ENCODE measurements at regions of chr20 and their contacts with region 1.

Region 1: DNA sequence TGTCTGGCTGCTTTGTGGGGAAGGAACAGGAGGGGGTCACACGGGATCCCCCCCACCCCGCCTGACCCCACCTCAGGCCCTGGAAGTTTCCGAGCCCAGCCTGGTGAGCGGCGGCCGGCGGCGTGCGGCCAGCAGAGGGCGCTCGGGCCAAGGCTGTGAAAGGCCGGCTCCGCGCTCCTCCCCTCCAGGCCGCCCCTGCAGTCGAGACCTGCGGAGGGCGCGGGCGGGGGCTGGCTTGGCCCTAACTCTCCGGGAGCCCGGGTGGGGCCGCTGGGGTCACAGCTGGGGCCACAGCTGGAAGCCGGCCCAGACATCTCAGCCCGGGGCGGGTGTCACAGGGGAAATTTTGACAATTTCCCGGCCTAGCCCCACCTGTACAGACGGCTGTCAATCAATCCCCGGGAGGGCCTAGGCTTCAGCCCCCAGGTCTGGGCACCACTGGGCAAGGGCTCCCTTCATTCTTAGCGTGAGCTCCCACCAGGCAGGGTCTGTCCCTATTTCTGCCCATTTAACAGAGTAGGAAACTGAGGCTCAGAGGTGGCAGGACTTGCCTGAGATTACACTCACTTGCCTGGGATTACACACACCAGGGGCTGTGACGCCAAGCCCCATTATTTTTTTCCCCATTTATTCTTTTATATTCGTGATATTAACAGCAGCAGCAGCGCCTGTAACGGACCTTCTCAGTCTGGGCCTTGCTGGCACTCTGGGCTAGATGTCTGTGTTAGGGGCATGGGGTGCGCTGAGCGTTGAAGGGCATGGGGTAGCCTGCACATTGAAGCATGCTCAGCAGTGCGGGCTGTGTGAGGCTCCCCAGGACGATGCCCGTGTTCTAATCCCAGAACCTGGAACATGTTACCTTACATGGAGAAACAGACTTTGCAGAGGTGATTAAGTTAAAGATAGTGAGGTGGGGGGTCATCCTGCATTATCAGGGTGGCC is 23.0 kb downstream of the ZBP1 start:
- DNase-seq: peak in 1 of 2 experiments; percentile 92
- H3K4me3 ChIP-seq: peak overlapping the region in 1 of 4 experiments; percentile 49; a peak in 2 of 8 replicates
- H3K27ac ChIP-seq: no peak overlapping the region
- H3K4me1 ChIP-seq: no peaks in the 10 kb centered on the region; a peak in 3 of 7 replicates
- H3K27me3 ChIP-seq: no peaks in the 10 kb centered on the region
- CTCF ChIP-seq: peak; percentile 76 to 90 (median 89)
- EP300 ChIP-seq: no peak
- POLR2A ChIP-seq: no peak
- RAD21 ChIP-seq: peak; percentile 89 to 91

Region 2: GRCh38 chr20:57498425-57499400 is 98.6 kb before region 1 on chr20:
- CTCF ChIA-PET with region 1: interaction called, 15 read pairs
- POLR2A ChIA-PET with region 1: interaction called, 3 read pairs
- DNase-seq: no peak
- H3K4me3 ChIP-seq: no peak overlapping the region
- H3K27ac ChIP-seq: no peak overlapping the region
- H3K4me1 ChIP-seq: peaks cover 0 to 4% (median 2%) of the 10 kb centered on the region in 4 experiments; a peak in 5 of 7 replicates
- H3K27me3 ChIP-seq: no peaks in the 10 kb centered on the region
- CTCF ChIP-seq: peak; percentile 62 to 68 (median 68)
- EP300 ChIP-seq: no peak
- POLR2A ChIP-seq: no peak
- RAD21 ChIP-seq: peak; percentile 52 to 69

Region 3: GRCh38 chr20:57514273-57514751 is 83.0 kb before region 1 on chr20:
- CTCF ChIA-PET with region 1: interaction called, 194 read pairs
- POLR2A ChIA-PET with region 1: interaction called, 3 read pairs
- DNase-seq: peak in 1 of 2 experiments; percentile 71
- H3K4me3 ChIP-seq: no peak overlapping the region
- H3K27ac ChIP-seq: no peak overlapping the region
- H3K4me1 ChIP-seq: peaks cover 2 to 11% (median 3%) of the 10 kb centered on the region in 4 experiments; a peak in 5 of 7 replicates
- H3K27me3 ChIP-seq: no peaks in the 10 kb centered on the region
- CTCF ChIP-seq: peak; percentile 54 to 95 (median 80)
- EP300 ChIP-seq: no peak
- POLR2A ChIP-seq: no peak
- RAD21 ChIP-seq: peak; percentile 96 to 99

Region 4: GRCh38 chr20:57526087-57526884 is 71.0 kb before region 1 on chr20:
- CTCF ChIA-PET with region 1: interaction called, 15 read pairs
- POLR2A ChIA-PET with region 1: no interaction called
- DNase-seq: peak in 1 of 2 experiments; percentile 74
- H3K4me3 ChIP-seq: no peak overlapping the region
- H3K27ac ChIP-seq: no peak overlapping the region
- H3K4me1 ChIP-seq: peaks cover 0 to 19% (median 5%) of the 10 kb centered on the region in 4 experiments; a peak in 5 of 7 replicates
- H3K27me3 ChIP-seq: no peaks in the 10 kb centered on the region; a peak in 2 of 7 replicates
- CTCF ChIP-seq: peak; percentile 32 to 97 (median 59)
- EP300 ChIP-seq: no peak
- POLR2A ChIP-seq: no peak
- RAD21 ChIP-seq: peak; percentile 13 to 20; a peak in 3 of 4 replicates

Region 5: GRCh38 chr20:57560554-57561355 is 36.5 kb before region 1 on chr20 and contains the start of gene PCK1:
- CTCF ChIA-PET with region 1: no interaction called
- POLR2A ChIA-PET with region 1: no interaction called
- DNase-seq: no peak
- H3K4me3 ChIP-seq: no peak within 1 kb of the TSS
- H3K27ac ChIP-seq: no peak within 1 kb of the TSS
- H3K4me1 ChIP-seq: no peaks in the 10 kb centered on the region
- H3K27me3 ChIP-seq: no peaks in the 10 kb centered on the region
- CTCF ChIP-seq: no peak
- EP300 ChIP-seq: no peak
- POLR2A ChIP-seq: no peak
- RAD21 ChIP-seq: no peak
- total RNA-seq, gene PCK1: not detected in 2 replicates

Region 6: DNA sequence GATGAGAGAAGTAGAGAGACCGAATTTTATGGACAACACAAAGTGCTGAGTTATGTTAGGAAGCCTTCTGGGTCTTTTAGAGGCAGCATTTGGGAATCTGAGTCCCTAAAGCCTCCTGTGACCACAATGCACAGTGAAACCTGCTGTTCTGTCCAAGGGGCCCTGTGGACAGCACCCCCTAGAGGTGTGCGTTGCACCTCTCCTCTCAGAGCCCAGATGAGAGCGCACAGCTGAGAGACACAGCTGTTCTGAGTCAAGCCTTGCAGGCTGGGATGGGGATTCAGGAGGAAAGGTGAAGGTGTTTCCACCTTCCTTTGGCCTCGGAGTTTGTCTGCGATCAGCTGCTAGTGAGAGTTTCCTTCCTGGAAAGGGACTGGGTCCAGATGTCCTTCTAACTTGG is 23.4 kb before region 1 on chr20:
- CTCF ChIA-PET with region 1: interaction called, 24 read pairs
- POLR2A ChIA-PET with region 1: no interaction called
- DNase-seq: peak in 1 of 2 experiments; percentile 73
- H3K4me3 ChIP-seq: no peak overlapping the region
- H3K27ac ChIP-seq: no peak overlapping the region
- H3K4me1 ChIP-seq: peaks cover 0 to 10% (median 3%) of the 10 kb centered on the region in 4 experiments; a peak in 4 of 7 replicates
- H3K27me3 ChIP-seq: peaks cover 0 to 4% (median 0%) of the 10 kb centered on the region in 4 experiments; a peak in 4 of 7 replicates
- CTCF ChIP-seq: peak; percentile 73 to 89 (median 83)
- EP300 ChIP-seq: no peak
- POLR2A ChIP-seq: no peak
- RAD21 ChIP-seq: peak; percentile 41 to 61

Region 7: DNA sequence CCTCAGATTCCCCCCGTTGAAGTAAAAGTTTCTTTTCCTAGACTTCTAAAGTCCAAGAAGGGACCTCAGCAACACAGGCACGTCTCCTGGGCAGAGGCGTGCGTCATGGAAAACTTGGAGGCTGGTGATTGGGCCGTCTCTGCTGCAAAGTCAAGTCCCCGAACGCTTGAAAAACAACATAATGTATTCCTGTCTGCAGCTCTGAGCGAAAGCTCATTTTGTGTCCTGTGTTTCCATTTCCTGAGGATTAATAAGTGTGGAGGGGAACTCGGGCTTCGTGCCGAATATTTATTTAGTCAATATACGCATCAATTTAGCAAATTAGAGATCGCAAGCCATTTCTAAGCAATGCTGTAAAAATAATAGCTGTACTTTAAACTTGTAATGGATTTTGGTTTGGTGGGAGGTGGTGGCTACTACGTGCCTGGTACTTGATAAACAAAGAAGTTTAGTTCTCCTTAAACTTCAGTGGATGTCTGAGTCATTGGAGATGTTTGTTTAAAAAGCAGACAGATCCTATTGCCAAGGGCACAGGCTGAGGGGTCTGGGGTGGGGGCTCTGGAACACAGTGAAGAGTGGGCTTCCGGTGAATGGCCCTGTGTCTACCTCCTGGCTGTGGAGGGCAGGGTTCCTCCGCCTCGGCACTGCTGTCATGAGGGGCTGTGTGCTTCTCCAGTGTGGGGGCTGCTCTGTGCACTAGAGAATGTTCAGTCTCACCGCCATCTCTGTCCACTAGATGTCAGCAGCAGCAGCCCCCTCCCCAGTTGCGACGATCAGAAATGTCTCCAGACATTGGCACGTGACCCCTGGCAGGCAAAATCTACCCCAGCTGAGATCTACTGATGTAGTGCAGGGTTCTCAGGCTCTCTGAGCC is 14.6 kb before region 1 on chr20:
- CTCF ChIA-PET with region 1: interaction called, 10 read pairs
- POLR2A ChIA-PET with region 1: no interaction called
- DNase-seq: peak in 1 of 2 experiments; percentile 63
- H3K4me3 ChIP-seq: no peak overlapping the region
- H3K27ac ChIP-seq: no peak overlapping the region
- H3K4me1 ChIP-seq: peaks cover 0 to 2% (median 0%) of the 10 kb centered on the region in 4 experiments; a peak in 1 of 7 replicates
- H3K27me3 ChIP-seq: peaks cover 0 to 2% (median 0%) of the 10 kb centered on the region in 4 experiments; a peak in 2 of 7 replicates
- CTCF ChIP-seq: peak; percentile 65 to 85 (median 69)
- EP300 ChIP-seq: no peak
- POLR2A ChIP-seq: no peak
- RAD21 ChIP-seq: peak; percentile 37 to 53; a peak in 3 of 4 replicates

Region 8: GRCh38 chr20:58209652-58210397 is 612.6 kb after region 1 on chr20:
- CTCF ChIA-PET with region 1: interaction called, 85 read pairs
- POLR2A ChIA-PET with region 1: no interaction called
- DNase-seq: peak in 1 of 2 experiments; percentile 98
- H3K4me3 ChIP-seq: peak overlapping the region in 1 of 4 experiments; percentile 42; a peak in 2 of 8 replicates
- H3K27ac ChIP-seq: no peak overlapping the region
- H3K4me1 ChIP-seq: no peaks in the 10 kb centered on the region
- H3K27me3 ChIP-seq: no peaks in the 10 kb centered on the region; a peak in 4 of 7 replicates
- CTCF ChIP-seq: peak; percentile 100
- EP300 ChIP-seq: no peak
- POLR2A ChIP-seq: no peak
- RAD21 ChIP-seq: peak; percentile 98 to 99